Esophagus muscularis mucosa (tissue), 4 donors: ENCODE measurements at regions of chr17 and their contacts with region 1.

Region 1: DNA sequence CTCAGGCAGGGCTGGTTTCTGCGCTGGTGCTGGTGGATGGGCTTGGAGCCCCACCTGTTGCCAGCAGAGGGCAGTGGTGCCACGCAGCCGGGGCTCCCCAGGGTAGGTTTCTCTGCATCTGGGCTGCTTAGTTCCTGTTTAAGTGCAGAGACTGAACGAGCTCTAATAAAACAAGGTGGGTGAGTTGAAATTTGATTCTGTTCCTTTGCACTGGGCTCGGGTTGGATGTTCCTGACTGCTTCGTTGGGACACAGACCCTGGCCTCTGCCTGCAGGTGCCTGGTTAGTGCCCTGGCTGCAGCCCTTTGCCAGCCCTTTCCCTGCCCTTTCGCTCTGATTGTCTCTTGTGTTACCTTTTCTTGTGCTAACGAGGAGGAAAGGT is 30.0 kb downstream of the TBCD start:
- DNase-seq: no peak
- H3K4me3 ChIP-seq: no peak overlapping the region
- H3K27ac ChIP-seq: peak overlapping the region in 1 of 4 donors; percentile 50
- H3K4me1 ChIP-seq: peaks cover 0 to 11% (median 9%) of the 10 kb centered on the region in 4 donors
- H3K27me3 ChIP-seq: no peaks in the 10 kb centered on the region
- CTCF ChIP-seq: peak; percentile 91 to 97 (median 94)
- EP300 ChIP-seq: no peak
- POLR2A ChIP-seq: no peak

Region 2: DNA sequence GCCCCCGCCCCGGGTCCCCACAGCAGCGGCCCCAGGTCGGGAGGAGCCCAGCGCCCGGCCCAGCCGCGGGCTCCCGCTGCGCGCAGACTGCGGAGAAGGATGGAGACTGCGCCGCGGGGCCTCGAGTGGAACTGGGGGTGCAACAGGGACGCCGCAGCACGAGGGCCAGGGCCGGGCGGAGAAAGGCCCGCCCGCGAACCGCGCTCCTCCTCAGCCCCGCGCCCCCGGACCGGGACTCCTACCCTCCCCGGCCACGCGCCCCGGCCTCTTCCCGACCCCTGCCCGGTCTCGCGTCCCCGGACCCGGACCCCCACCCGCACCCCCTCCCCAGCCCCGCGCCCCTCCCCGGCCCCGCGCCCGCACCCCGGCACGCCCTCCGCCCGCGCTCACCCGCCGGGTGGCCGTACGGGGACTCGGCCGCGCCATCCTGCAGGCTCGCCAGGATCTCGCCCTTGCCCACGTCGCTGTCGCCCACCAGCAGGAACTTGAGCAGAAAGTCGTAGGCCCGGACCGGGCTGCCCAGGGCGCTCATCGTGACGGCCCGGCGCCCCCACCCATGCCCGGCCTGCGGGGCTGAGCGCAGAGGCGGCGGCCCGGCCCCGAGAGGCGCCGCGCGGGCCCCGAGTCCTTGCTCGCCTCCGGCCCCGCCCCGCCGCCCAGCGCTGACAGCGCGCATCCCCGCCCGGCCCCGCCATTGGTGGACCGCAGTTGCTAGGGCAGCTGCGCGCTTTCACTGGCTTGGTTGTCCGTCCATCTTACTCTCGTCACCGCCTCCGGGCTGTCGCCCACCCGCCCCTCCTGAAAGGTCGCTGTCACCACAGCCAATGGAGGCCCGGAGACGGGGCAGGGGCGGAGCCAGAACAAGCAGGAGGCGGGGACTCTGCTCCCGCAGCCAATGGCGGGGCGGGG is 83.6 kb before region 1 on chr17 and contains the start of gene RAB40B:
- intact Hi-C with region 1: no loop called
- DNase-seq: peak; percentile 100
- H3K4me3 ChIP-seq: peak within 1 kb of the TSS; percentile 75 to 89 (median 88)
- H3K27ac ChIP-seq: peak within 1 kb of the TSS; percentile 74 to 84 (median 78)
- H3K4me1 ChIP-seq: peaks cover 15 to 33% (median 24%) of the 10 kb centered on the region in 4 donors
- H3K27me3 ChIP-seq: no peaks in the 10 kb centered on the region
- CTCF ChIP-seq: no peak
- EP300 ChIP-seq: no peak
- POLR2A ChIP-seq: no peak
- total RNA-seq, gene RAB40B: 6.2 to 24.3 (median 19.4) TPM

Region 3: GRCh38 chr17:82734987-82735866 is 46.7 kb before region 1 on chr17 and contains the start of gene FN3K:
- intact Hi-C with region 1: no loop called
- DNase-seq: no peak
- H3K4me3 ChIP-seq: peak within 1 kb of the TSS; percentile 78 to 94 (median 87)
- H3K27ac ChIP-seq: peak within 1 kb of the TSS; percentile 87 to 91 (median 88)
- H3K4me1 ChIP-seq: peaks cover 10 to 35% (median 30%) of the 10 kb centered on the region in 4 donors
- H3K27me3 ChIP-seq: no peaks in the 10 kb centered on the region
- CTCF ChIP-seq: no peak
- EP300 ChIP-seq: peak; percentile 78
- POLR2A ChIP-seq: no peak
- total RNA-seq, gene FN3K: 3.4 to 22.7 (median 6.5) TPM

Region 4: GRCh38 chr17:82876602-82877379 is 94.9 kb after region 1 on chr17:
- intact Hi-C with region 1: loop called (anchors 10 kb)
- DNase-seq: no peak
- H3K4me3 ChIP-seq: peak overlapping the region in 3 of 4 donors; percentile 5 to 13 (median 8)
- H3K27ac ChIP-seq: peak overlapping the region; percentile 73 to 83 (median 78)
- H3K4me1 ChIP-seq: peaks cover 43 to 71% (median 65%) of the 10 kb centered on the region in 4 donors
- H3K27me3 ChIP-seq: no peaks in the 10 kb centered on the region
- CTCF ChIP-seq: peak; percentile 27 to 61 (median 50)
- EP300 ChIP-seq: no peak
- POLR2A ChIP-seq: no peak

Region 5: DNA sequence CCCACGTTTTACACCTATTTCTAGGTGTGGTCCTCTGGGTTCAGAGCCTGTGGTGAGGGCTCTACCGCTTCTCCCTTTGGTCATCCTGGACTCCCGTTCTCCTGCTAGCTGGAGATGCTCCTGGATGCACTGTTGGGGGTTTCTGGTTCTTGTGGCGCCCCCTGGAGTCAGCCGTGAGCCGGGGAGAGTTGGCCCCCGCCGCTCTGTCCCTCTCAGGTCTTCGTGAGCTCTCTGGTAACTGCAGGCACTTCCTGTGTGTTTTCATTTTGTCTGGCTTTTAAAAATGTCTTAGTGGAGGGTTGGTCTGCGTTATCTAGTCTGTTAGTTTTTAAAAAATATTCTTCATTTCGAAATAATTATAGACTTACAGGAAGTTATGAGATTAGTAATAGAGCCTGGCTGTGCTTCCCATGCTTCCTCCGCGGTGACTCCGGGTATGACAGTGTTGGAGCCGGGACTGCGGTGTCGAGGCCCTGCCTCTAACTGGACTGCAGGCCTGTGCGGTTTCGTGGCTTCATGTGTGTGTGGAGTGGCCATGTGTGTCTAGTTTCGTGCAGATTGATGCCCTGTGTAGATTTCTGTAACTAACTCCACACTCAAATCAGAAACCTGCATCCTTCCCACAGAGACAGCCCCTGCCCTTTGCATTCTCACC is 135.9 kb after region 1 on chr17:
- intact Hi-C with region 1: loop called (anchors 5 kb)
- DNase-seq: no peak
- H3K4me3 ChIP-seq: no peak overlapping the region
- H3K27ac ChIP-seq: no peak overlapping the region
- H3K4me1 ChIP-seq: peaks cover 0 to 2% (median under 1%) of the 10 kb centered on the region in 4 donors
- H3K27me3 ChIP-seq: no peaks in the 10 kb centered on the region
- CTCF ChIP-seq: peak; percentile 26 to 37 (median 34)
- EP300 ChIP-seq: no peak
- POLR2A ChIP-seq: no peak